Sigmoid colon (tissue), 7 donors: ENCODE measurements at regions of chr14 and their contacts with region 1.

Region 1: GRCh38 chr14:84254290-84254689 is 1275.7 kb upstream of the FLRT2 start:
- DNase-seq: no peak
- H3K4me3 ChIP-seq: no peak overlapping the region
- H3K27ac ChIP-seq: no peak overlapping the region
- H3K4me1 ChIP-seq: peaks cover 0 to 6% (median 0%) of the 10 kb centered on the region in 4 donors
- H3K27me3 ChIP-seq: no peaks in the 10 kb centered on the region
- CTCF ChIP-seq: no peak
- EP300 ChIP-seq: no peak
- POLR2A ChIP-seq: no peak

Region 2: GRCh38 chr14:83697099-83697498 is 557.2 kb before region 1 on chr14:
- intact Hi-C with region 1: loop called (anchors 10 kb)
- DNase-seq: no peak
- H3K4me3 ChIP-seq: no peak overlapping the region
- H3K27ac ChIP-seq: no peak overlapping the region
- H3K4me1 ChIP-seq: no peaks in the 10 kb centered on the region
- H3K27me3 ChIP-seq: no peaks in the 10 kb centered on the region
- CTCF ChIP-seq: no peak
- EP300 ChIP-seq: no peak
- POLR2A ChIP-seq: no peak

Region 3: GRCh38 chr14:84351646-84352045 is 97.4 kb after region 1 on chr14:
- intact Hi-C with region 1: no loop called
- DNase-seq: no peak
- H3K4me3 ChIP-seq: no peak overlapping the region
- H3K27ac ChIP-seq: no peak overlapping the region
- H3K4me1 ChIP-seq: no peaks in the 10 kb centered on the region
- H3K27me3 ChIP-seq: no peaks in the 10 kb centered on the region
- CTCF ChIP-seq: no peak
- EP300 ChIP-seq: no peak
- POLR2A ChIP-seq: no peak